Sigmoid colon (tissue), 7 donors: ENCODE measurements at regions of chr18 and their contacts with region 1.

Region 1: DNA sequence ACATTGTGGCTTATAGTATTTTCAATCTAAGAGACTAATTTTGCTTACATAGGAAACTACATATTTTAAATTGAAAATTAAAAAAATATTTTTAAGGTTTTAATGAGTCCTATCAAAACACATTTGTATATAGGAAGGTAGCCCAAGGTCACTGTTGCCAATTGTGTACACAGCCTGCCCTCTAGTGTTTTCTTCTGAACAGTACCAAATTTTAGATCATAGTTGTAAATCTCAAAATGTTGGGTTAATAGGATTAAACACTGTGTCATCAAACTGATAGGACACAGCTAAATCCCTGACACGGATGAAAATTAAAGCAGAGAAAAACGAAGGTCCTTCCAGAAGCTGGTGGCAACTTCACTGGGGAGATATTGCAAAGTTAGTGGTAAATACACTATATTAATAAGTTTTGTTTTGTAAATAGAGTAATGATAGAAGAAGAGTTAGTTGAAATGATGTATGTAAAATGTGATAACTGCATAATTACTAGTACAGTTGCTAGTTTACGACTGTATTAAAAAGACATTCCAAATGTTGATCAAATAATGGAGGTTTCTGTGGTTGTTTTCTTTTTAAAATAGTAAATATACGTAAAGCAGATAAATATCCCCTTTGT is 19.7 kb downstream of the CLUL1 start:
- DNase-seq: no peak
- H3K4me3 ChIP-seq: no peak overlapping the region
- H3K27ac ChIP-seq: no peak overlapping the region
- H3K4me1 ChIP-seq: no peaks in the 10 kb centered on the region
- H3K27me3 ChIP-seq: no peaks in the 10 kb centered on the region
- CTCF ChIP-seq: peak; percentile 60 to 76 (median 66)
- EP300 ChIP-seq: no peak
- POLR2A ChIP-seq: no peak

Region 2: GRCh38 chr18:286515-287310 is 329.8 kb before region 1 on chr18:
- intact Hi-C with region 1: loop called (anchors 2 kb)
- DNase-seq: no peak
- H3K4me3 ChIP-seq: no peak overlapping the region
- H3K27ac ChIP-seq: no peak overlapping the region
- H3K4me1 ChIP-seq: no peaks in the 10 kb centered on the region
- H3K27me3 ChIP-seq: no peaks in the 10 kb centered on the region
- CTCF ChIP-seq: peak; percentile 27 to 54 (median 46)
- EP300 ChIP-seq: no peak
- POLR2A ChIP-seq: no peak

Region 3: GRCh38 chr18:295756-296490 is 320.6 kb before region 1 on chr18:
- intact Hi-C with region 1: loop called (anchors 2 kb)
- DNase-seq: no peak
- H3K4me3 ChIP-seq: no peak overlapping the region
- H3K27ac ChIP-seq: no peak overlapping the region
- H3K4me1 ChIP-seq: no peaks in the 10 kb centered on the region
- H3K27me3 ChIP-seq: no peaks in the 10 kb centered on the region
- CTCF ChIP-seq: no peak
- EP300 ChIP-seq: no peak
- POLR2A ChIP-seq: no peak

Region 4: DNA sequence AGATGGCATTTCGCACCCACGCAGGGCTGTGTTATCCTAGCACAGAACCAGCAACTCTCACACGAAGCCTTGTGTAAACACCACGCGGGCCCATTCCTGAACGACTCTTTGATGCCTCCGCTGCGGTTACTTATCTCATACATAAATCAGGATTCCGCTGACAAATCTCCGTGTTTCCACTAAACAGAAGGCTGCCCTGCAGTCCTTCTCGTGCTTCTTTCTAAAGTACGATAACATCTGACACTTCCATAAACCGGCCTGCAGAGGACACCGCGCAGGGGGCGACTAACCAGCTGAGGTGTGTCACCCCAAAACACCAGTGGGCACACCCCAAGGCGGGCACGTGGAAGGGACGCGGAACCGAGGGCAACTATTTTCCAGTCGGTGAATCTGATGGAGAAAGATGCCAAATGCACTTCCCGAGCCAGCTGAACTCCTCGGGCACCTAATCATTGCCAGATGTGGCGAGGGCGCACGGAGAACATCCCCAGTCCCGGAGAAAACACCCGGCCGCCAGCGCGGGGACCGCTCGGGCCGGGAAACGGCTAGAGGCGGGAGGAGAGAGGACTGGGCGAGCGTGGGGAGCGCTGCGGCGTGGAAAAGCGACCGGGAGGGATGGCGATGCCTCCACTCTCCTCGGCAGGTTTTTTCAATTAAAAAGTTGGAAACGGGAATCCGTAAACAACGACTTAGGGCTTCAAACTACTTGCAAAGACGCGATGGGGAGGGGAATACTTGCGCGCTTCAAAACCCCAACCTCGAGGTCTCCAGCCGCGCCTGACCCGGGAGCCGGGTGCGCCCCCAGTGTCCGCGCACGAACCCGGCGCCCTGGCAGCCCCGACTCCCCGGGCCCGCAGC is 116.7 kb before region 1 on chr18:
- intact Hi-C with region 1: loop called (anchors 5 kb)
- DNase-seq: peak; percentile 65
- H3K4me3 ChIP-seq: peak overlapping the region; percentile 31 to 72 (median 60)
- H3K27ac ChIP-seq: peak overlapping the region; percentile 55 to 73 (median 62)
- H3K4me1 ChIP-seq: peaks cover 0 to 29% (median 19%) of the 10 kb centered on the region in 4 donors
- H3K27me3 ChIP-seq: peaks cover 0 to 32% (median 7%) of the 10 kb centered on the region in 3 donors
- CTCF ChIP-seq: no peak
- EP300 ChIP-seq: no peak
- POLR2A ChIP-seq: no peak

Region 5: DNA sequence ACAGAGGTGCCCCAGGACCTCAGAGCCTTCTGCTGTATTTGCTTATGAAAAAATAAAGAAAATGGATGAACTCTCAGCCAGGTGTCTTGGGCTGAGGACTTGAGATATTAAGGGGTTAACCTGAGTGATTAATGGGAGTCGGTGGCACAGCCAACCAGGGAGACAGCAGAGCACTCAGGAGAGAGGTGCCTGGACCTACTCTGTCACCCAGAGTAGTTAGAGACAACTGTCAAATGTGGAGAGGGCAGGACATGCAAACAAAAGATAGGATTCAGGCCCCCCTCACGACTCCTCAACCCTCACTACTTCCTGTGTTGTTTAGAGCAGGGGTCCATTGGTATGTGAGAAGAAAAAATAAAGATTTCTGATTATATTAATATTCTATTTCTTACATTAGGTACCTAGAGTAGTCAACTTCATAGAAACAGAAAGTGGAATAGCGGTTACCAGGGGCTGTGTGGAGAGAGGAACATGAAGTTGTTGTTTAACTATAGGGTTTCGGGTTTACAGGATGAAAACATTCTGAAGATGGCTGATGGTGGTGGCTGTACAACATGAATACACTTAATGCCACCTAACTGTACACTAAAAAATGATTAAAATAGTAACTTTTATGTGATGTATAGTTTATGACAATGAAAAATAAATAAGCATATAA is 65.0 kb before region 1 on chr18:
- intact Hi-C with region 1: no loop called
- DNase-seq: no peak
- H3K4me3 ChIP-seq: no peak overlapping the region
- H3K27ac ChIP-seq: no peak overlapping the region
- H3K4me1 ChIP-seq: no peaks in the 10 kb centered on the region
- H3K27me3 ChIP-seq: no peaks in the 10 kb centered on the region
- CTCF ChIP-seq: no peak
- EP300 ChIP-seq: no peak
- POLR2A ChIP-seq: no peak